Heart right ventricle (tissue), 16 donors: ENCODE measurements at regions of chr21 and their contacts with region 1.

Region 1: GRCh38 chr21:17903029-17903806 is 84.1 kb upstream of the C21orf91 start:
- DNase-seq: no peak
- ATAC-seq: no peak
- H3K4me3 ChIP-seq: no peak overlapping the region
- H3K27ac ChIP-seq: no peak overlapping the region
- H3K4me1 ChIP-seq: peaks cover 0 to 24% (median 6%) of the 10 kb centered on the region in 9 donors
- H3K27me3 ChIP-seq: no peaks in the 10 kb centered on the region
- CTCF ChIP-seq: peak in 6 of 9 donors; percentile 42 to 57 (median 46)

Region 2: DNA sequence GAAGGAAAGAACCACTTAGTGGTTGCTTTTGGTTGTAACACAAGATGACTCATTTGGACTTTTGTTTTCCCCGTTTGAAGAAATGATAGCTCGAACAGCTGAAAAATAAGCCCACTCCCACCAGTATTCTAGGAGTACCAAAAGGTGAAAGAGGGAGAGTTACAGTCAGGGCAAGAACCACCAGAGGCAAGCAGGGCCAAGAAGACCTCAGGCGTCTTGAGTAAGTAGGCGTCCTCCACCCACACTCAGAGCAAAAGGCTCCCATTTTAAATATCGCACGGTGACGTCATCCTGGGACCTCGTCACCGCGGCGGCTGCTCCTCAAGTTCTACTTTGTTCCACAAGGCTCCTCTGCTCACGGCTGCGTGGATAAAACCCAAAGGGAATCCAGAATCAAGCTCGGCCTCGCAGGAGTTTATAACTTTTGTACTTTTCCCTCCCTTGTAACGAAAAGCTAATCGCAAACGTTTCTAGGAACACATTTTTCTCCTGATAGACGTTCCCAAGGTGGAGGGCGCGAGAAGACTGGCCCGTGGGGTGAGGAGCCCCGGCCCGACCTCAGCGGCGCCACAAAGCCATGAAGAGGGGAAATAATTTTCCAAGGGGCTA is 291.7 kb before region 1 on chr21:
- intact Hi-C with region 1: loop called in 1 of 10 experiments (anchors 5 kb)
- DNase-seq: peak; percentile 59 to 81
- ATAC-seq: peak; percentile 57 to 90 (median 76)
- H3K4me3 ChIP-seq: peak overlapping the region; percentile 78 to 92 (median 84)
- H3K27ac ChIP-seq: peak overlapping the region in 9 of 10 donors; percentile 47 to 91 (median 85)
- H3K4me1 ChIP-seq: peaks cover 0 to 24% (median 11%) of the 10 kb centered on the region in 9 donors
- H3K27me3 ChIP-seq: peaks cover 0 to 2% (median 0%) of the 10 kb centered on the region in 7 donors
- CTCF ChIP-seq: peak in 1 of 9 donors; percentile 5

Region 3: DNA sequence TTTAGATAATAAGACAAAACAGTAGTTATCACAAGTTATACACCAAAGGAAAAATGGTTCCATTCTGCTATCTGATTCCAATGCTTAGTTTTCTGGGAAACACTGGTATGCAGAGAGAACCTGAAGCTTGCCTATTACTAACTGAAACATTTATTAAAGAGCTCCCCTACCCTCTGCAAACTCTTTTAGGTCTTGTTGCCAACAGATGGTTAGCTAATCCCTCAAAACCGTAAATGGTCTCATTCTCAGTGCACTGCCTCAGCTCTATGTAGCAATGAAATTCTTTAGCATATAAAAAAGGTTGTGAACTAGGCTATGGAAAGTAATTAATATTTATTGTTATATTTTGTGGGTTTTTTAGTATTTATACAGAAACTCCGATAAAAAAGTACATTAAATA is 104.4 kb before region 1 on chr21:
- intact Hi-C with region 1: loop called in 1 of 10 experiments (anchors 5 kb)
- DNase-seq: no peak
- ATAC-seq: no peak
- H3K4me3 ChIP-seq: no peak overlapping the region
- H3K27ac ChIP-seq: no peak overlapping the region
- H3K4me1 ChIP-seq: peaks cover 0 to 60% (median 37%) of the 10 kb centered on the region in 9 donors
- H3K27me3 ChIP-seq: no peaks in the 10 kb centered on the region
- CTCF ChIP-seq: no peak